ENCODE measurements at regions of chr9 and their contacts with region 1.

Region 1: GRCh38 chr9:118595719-118596305 is 773.4 kb downstream of the BRINP1 start:
- DNase-seq: peak; percentile 60
- H3K4me3 ChIP-seq: no peak overlapping the region
- H3K27ac ChIP-seq: no peak overlapping the region
- H3K4me1 ChIP-seq: no peaks in the 10 kb centered on the region
- H3K27me3 ChIP-seq: no peaks in the 10 kb centered on the region
- CTCF ChIP-seq: peak; percentile 60 to 77

Region 2: DNA sequence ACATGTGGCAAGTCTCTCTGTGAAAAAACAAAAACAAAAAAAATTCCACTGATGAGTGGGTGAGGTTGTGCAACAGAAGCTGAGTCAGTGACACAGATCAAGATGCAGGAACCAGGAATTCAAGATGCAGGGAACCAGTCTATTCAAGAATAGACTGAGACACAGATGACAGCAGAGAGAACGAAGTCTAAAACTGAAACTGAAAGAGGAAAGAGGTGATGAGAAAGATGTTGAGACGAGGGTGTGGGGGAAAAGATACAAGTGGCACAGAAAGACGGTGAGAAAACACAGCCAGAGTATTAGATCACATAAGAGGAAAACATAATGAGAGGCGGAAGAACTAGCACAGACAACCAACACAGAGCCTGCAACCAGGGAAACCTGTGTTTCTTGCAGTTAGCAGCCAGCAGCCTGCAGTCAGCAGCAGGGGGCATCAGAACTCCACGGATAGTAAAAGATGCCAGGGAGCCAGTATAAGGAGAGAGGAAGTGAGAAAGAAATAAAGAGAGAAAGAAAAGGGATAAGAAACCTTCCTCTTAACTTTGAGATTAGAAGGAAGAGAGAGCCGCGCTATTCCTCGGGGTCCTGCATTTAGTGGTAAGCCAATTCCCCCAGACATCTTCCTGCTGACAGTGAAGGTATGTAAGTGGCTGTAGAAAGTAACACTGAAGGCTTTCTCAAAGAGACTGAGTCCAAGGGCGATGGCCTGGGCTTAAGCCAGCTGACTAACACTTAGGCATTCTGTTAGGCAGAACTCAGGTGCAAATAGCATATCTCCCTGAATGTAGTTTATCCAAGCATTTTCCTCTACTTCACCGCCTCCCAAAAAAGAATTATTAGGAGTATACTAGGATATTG is 812.7 kb before region 1 on chr9:
- CTCF ChIA-PET with region 1: no interaction called
- dilution Hi-C with region 1: no loop called
- in situ Hi-C with region 1: no loop called
- intact Hi-C with region 1: loop called (anchors 2 kb)
- DNase-seq: peak; percentile 71
- H3K4me3 ChIP-seq: peak overlapping the region; percentile 54 to 72 (median 55)
- H3K27ac ChIP-seq: no peak overlapping the region
- H3K4me1 ChIP-seq: peaks cover 7% of the 10 kb centered on the region
- H3K27me3 ChIP-seq: no peaks in the 10 kb centered on the region
- CTCF ChIP-seq: peak; percentile 92 to 93

Region 3: GRCh38 chr9:118659011-118659410 is 63.2 kb after region 1 on chr9:
- CTCF ChIA-PET with region 1: no interaction called
- dilution Hi-C with region 1: loop called (anchors 5 kb)
- in situ Hi-C with region 1: no loop called
- intact Hi-C with region 1: no loop called
- DNase-seq: peak; percentile 80
- H3K4me3 ChIP-seq: no peak overlapping the region
- H3K27ac ChIP-seq: no peak overlapping the region
- H3K4me1 ChIP-seq: peaks cover 8% of the 10 kb centered on the region
- H3K27me3 ChIP-seq: no peaks in the 10 kb centered on the region
- CTCF ChIP-seq: no peak

Region 4: DNA sequence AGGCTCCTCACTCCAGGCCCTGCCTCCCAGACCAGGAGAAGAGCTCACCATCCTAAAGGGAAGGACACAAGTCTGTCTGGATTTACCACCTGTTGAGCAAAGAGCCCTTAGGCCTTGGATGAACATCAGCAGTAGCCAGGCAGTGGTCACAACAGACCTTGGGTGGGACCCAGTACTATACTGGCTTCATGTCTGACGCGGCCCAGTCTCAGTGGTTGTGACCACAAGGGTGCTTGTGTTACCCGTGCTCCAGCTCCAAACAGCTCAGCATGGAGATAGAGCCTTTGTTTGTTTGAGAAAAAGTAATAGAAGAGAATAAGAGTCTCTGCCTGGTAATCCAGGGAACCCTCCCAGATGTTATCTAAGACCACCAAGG is 156.0 kb after region 1 on chr9:
- CTCF ChIA-PET with region 1: interaction called, 3 read pairs
- dilution Hi-C with region 1: no loop called
- in situ Hi-C with region 1: no loop called
- intact Hi-C with region 1: loop called (anchors 2 kb)
- DNase-seq: no peak
- H3K4me3 ChIP-seq: no peak overlapping the region
- H3K27ac ChIP-seq: no peak overlapping the region
- H3K4me1 ChIP-seq: no peaks in the 10 kb centered on the region
- H3K27me3 ChIP-seq: no peaks in the 10 kb centered on the region
- CTCF ChIP-seq: no peak

Region 5: DNA sequence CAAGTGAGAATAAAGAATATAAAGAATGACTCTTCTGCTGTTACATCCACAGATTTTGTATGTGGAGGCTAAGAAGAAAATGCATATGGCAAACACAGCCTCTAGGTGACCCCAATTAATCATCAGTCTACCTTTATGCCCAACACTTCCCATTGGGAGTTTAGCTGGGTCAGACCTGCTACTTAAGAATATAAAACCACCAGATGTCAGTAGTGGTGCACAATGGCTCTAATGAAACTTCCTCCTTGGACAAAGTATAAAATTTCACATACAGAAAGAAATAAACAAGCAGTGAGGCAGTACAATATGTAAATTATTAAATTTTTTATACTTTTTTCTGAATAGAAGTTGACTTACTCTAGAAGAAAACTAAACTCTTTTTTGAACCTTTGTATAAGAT is 233.5 kb after region 1 on chr9:
- CTCF ChIA-PET with region 1: no interaction called
- dilution Hi-C with region 1: no loop called
- in situ Hi-C with region 1: no loop called
- intact Hi-C with region 1: loop called (anchors 1 kb)
- DNase-seq: peak; percentile 22
- H3K4me3 ChIP-seq: no peak overlapping the region
- H3K27ac ChIP-seq: no peak overlapping the region
- H3K4me1 ChIP-seq: no peaks in the 10 kb centered on the region
- H3K27me3 ChIP-seq: no peaks in the 10 kb centered on the region
- CTCF ChIP-seq: no peak

Region 6: GRCh38 chr9:119289740-119290433 is 694.1 kb after region 1 on chr9:
- CTCF ChIA-PET with region 1: no interaction called
- dilution Hi-C with region 1: no loop called
- in situ Hi-C with region 1: loop called in 1 of 2 experiments (anchors 25 kb)
- intact Hi-C with region 1: loop called (anchors 1 kb)
- DNase-seq: peak; percentile 50
- H3K4me3 ChIP-seq: no peak overlapping the region
- H3K27ac ChIP-seq: no peak overlapping the region
- H3K4me1 ChIP-seq: no peaks in the 10 kb centered on the region
- H3K27me3 ChIP-seq: no peaks in the 10 kb centered on the region
- CTCF ChIP-seq: peak; percentile 49 to 66